SK-N-SH (cell line): ENCODE measurements at regions of chr14 and their contacts with region 1.

Region 1: DNA sequence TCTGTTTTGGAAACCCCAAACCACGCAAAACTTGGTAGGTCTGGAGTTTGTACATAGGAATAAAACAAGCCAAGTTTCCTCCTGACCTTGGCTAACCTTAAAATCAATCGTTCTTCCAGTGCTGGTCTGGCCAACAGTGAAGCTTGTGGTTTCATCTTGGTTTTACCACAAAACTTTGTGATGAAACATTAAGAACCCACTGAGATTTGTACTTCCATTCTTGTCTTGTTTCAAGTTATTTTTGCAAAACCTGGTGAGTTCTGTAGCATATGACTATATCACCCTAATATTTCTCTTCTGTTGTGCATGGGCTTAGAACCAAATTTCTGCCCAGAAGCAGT is 26.4 kb downstream of the SIX1 start:
- DNase-seq: no peak
- H3K4me3 ChIP-seq: no peak overlapping the region
- H3K27ac ChIP-seq: peak overlapping the region in 1 of 2 experiments; percentile 60; a peak in 2 of 4 replicates
- H3K4me1 ChIP-seq: peaks cover 0 to 15% of the 10 kb centered on the region in 2 experiments; a peak in 2 of 4 replicates
- H3K27me3 ChIP-seq: no peaks in the 10 kb centered on the region
- CTCF ChIP-seq: no peak
- EP300 ChIP-seq: no peak; a peak in 1 of 4 replicates
- RAD21 ChIP-seq: no peak

Region 2: GRCh38 chr14:60430276-60430675 is 192.6 kb before region 1 on chr14:
- CTCF ChIA-PET with region 1: no interaction called
- POLR2A ChIA-PET with region 1: no interaction called
- DNase-seq: no peak
- H3K4me3 ChIP-seq: no peak overlapping the region
- H3K27ac ChIP-seq: no peak overlapping the region
- H3K4me1 ChIP-seq: no peaks in the 10 kb centered on the region; a peak in 1 of 4 replicates
- H3K27me3 ChIP-seq: no peaks in the 10 kb centered on the region
- CTCF ChIP-seq: no peak
- EP300 ChIP-seq: no peak
- RAD21 ChIP-seq: no peak

Region 3: DNA sequence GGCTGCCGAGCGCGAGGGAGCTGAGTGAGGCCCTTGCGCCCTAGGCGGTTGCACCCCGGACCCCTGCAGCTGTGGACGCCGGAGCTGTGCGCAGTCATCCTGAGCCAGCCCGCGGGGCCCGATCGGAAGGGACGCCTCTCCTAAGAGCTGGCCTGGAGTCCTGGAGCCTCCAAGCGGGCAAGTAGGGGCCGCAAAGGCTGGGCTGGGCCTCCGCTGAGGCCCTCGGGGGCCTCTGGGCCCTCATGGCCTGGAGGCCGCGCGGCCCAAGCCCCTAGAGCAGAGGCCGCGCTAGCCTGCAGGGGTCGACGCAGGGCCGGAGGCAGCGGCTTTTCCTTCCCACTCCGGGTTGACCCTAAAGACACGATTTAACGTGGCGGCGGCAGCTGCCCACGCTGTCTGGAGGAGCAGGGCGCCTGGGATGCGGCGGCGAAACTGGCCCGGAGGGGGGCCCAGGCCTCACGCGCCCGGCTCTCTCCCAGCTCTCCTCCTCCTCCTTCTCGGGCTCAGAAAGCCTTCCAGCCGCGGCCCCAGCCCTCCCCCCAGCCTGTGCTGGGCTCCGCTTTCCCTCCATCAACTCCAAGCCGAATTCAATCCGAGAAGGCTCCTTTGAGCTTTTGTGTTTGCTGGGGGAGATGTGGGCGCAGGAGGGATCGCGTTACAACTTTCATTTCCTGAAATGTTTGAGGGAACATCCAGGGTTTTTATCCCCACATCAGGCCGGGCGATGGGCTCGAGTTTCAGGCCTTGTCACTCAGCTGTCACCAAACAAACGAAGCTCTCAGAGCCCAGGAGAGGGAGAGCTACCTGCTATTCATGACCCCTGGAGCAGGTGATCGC is 14.8 kb after region 1 on chr14:
- CTCF ChIA-PET with region 1: interaction called, 14 read pairs
- POLR2A ChIA-PET with region 1: interaction called, 3 read pairs
- DNase-seq: peak; percentile 67
- H3K4me3 ChIP-seq: peak overlapping the region; percentile 34 to 46; a peak in 3 of 4 replicates
- H3K27ac ChIP-seq: peak overlapping the region in 1 of 2 experiments; percentile 87; a peak in 2 of 4 replicates
- H3K4me1 ChIP-seq: peaks cover 18 to 24% of the 10 kb centered on the region in 2 experiments; a peak in 3 of 4 replicates
- H3K27me3 ChIP-seq: no peaks in the 10 kb centered on the region
- CTCF ChIP-seq: no peak
- EP300 ChIP-seq: peak in 1 of 2 experiments; percentile 34; a peak in 1 of 4 replicates
- RAD21 ChIP-seq: no peak

Region 4: DNA sequence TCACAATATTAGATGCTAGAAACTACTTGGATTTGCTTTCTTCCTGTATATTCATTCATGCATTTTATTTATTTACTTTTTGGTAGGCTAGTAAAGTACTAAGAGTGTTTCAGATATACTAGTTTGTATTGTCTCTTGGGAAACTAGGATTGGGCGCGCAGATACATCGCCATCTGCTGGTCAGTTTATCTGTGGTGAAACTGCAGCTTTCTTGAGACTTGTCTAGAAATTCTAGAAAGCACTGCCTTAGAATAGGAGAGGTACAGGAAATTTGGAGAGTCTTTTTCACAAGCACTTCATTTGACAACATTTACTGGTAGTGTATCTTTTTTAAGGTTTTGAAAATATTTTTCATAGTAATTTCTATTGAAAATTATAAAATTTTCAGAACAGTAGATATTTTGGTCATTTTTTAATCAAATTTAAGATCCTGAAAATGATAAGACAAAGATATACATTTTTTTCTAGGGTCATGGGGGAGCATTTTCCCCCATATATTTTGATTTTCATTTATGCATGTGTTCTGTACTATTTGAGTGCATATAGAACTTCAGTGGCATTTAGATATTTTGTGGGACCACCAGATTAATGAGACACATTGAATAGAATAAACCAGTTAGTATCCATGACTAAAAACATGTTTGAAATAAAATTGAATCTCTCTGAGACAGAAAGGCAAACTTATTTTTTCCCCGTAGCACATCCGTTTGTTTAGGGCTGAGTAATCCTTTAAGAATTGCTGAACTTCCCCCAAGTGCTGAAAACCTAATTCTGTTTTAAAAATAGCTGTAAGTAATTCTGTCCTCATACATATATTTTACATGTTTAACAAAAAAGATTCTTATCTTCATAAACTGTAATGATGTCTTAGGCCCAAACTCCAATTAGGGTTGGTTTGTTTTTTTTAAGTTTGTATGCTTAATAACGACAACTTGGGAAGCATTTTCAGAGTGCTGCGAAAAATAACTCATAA is 402.6 kb after region 1 on chr14:
- CTCF ChIA-PET with region 1: interaction called, 13 read pairs
- POLR2A ChIA-PET with region 1: no interaction called
- DNase-seq: peak; percentile 41
- H3K4me3 ChIP-seq: peak overlapping the region in 1 of 2 experiments; percentile 7; a peak in 1 of 4 replicates
- H3K27ac ChIP-seq: peak overlapping the region; percentile 75 to 83; a peak in 3 of 4 replicates
- H3K4me1 ChIP-seq: peaks cover 0 to 27% of the 10 kb centered on the region in 2 experiments; a peak in 3 of 4 replicates
- H3K27me3 ChIP-seq: no peaks in the 10 kb centered on the region
- CTCF ChIP-seq: peak; percentile 96
- EP300 ChIP-seq: peak in 1 of 2 experiments; percentile 30; a peak in 1 of 4 replicates
- RAD21 ChIP-seq: peak; percentile 87

Region 5: DNA sequence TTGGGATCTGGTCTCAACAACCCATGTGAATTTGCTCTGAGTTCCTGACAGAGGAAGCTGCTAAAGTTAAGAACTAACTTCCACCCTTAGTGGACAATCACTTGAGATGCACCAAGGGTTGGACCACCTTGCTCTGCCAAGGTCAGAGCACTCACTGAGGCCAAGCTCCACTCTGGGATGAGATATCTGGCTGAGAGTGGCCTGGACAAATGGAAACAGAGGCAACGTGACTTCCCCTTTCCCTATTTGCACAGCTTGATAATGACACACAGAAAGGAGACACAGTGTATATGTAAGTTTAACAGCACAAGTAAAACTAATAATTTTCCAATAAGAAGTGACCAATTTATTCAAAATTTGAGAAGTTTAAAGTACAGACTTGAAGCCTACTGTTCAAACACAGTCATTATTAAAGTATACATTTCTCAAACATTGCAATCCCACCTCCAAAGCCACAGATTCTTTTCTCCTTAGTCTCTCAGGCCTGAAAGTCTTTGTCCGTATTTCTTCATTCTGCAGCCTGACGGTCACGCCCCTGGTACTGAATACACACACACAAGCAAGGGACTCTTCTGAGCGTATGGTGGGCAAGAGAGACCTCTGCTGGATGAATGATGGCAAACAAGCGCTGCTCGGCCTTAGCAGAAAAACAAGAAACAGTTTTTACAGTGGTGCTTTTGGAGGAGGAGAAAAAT is 629.6 kb after region 1 on chr14:
- CTCF ChIA-PET with region 1: interaction called, 119 read pairs
- POLR2A ChIA-PET with region 1: no interaction called
- DNase-seq: peak; percentile 67
- H3K4me3 ChIP-seq: no peak overlapping the region; a peak in 1 of 4 replicates
- H3K27ac ChIP-seq: peak overlapping the region; percentile 68 to 83
- H3K4me1 ChIP-seq: peaks cover 3 to 19% of the 10 kb centered on the region in 2 experiments
- H3K27me3 ChIP-seq: no peaks in the 10 kb centered on the region
- CTCF ChIP-seq: peak; percentile 96
- EP300 ChIP-seq: peak in 1 of 2 experiments; percentile 32; a peak in 1 of 4 replicates
- RAD21 ChIP-seq: peak; percentile 99

Region 6: GRCh38 chr14:61260939-61261776 is 638.3 kb after region 1 on chr14:
- CTCF ChIA-PET with region 1: interaction called, 119 read pairs
- POLR2A ChIA-PET with region 1: no interaction called
- DNase-seq: no peak
- H3K4me3 ChIP-seq: peak overlapping the region in 1 of 2 experiments; percentile 19; a peak in 1 of 4 replicates
- H3K27ac ChIP-seq: peak overlapping the region; percentile 89 to 99
- H3K4me1 ChIP-seq: peaks cover 29 to 30% of the 10 kb centered on the region in 2 experiments
- H3K27me3 ChIP-seq: no peaks in the 10 kb centered on the region
- CTCF ChIP-seq: peak; percentile 50
- EP300 ChIP-seq: peak in 1 of 2 experiments; percentile 62; a peak in 2 of 4 replicates
- RAD21 ChIP-seq: no peak